Aorta (tissue), 5 donors: ENCODE measurements at regions of chr10 and their contacts with region 1.

Region 1: DNA sequence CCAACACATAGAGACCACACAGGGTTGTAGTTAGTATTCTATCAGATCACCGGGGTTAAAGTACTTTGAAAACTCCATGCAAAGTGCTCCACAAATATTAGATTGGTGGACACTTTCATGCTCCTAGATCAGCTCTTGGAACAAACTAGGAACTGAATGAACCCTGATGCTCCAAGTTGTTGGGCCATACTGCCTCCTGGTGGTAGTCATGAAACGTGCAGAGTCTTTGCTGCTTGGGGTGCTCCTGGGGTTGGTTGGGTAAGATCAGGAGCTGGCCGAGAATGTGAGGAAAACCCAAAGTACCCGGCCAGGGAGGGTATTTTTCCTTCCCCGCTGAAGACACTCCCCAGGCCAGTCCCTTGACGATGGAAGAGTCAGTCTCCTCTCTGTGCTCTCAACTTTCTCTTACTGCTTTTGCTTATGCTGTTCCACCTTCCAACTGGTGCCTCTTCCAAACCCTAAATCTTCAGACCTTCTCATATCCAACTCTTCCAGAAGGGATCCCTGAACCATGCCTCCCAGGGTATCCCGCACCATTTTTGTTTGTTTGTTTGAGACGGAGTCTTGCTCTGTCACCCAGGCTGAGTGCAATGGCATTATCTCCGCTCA is 920 bp upstream of the RPEL1 start:
- DNase-seq: peak; percentile 77 to 81
- ATAC-seq: peak; percentile 91
- H3K4me3 ChIP-seq: no peak overlapping the region
- H3K27ac ChIP-seq: no peak overlapping the region
- H3K4me1 ChIP-seq: peaks cover 0 to 7% of the 10 kb centered on the region in 2 donors
- H3K27me3 ChIP-seq: no peaks in the 10 kb centered on the region

Region 2: DNA sequence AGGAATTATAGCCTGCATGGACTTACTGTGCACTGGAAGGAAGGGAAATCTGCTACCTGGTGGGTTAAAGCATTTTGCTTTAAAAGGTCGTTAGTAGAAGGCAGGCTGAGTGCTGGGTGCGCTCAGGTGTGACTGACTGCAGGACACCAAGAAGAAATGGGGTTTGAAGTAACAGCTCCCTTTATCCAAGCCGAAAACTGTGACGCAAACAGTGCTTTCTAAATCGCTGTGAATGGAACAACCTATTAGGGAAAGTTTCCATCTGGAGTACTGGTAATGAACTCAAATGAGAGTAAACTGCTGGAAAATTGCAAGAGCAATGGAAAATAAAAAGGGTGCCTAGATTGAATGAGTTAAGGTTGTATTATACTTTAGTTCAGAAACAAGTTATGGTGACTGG is 231.4 kb before region 1 on chr10:
- intact Hi-C with region 1: no loop called
- DNase-seq: no peak
- ATAC-seq: no peak
- H3K4me3 ChIP-seq: no peak overlapping the region
- H3K27ac ChIP-seq: no peak overlapping the region
- H3K4me1 ChIP-seq: peaks cover 0 to 2% of the 10 kb centered on the region in 2 donors
- H3K27me3 ChIP-seq: no peaks in the 10 kb centered on the region

Region 3: GRCh38 chr10:103069453-103070331 is 175.1 kb before region 1 on chr10:
- intact Hi-C with region 1: loop called in 1 of 2 experiments (anchors 5 kb)
- DNase-seq: peak in 1 of 2 donors; percentile 69
- ATAC-seq: peak; percentile 51
- H3K4me3 ChIP-seq: no peak overlapping the region
- H3K27ac ChIP-seq: no peak overlapping the region
- H3K4me1 ChIP-seq: no peaks in the 10 kb centered on the region
- H3K27me3 ChIP-seq: no peaks in the 10 kb centered on the region

Region 4: GRCh38 chr10:103086799-103087198 is 158.0 kb before region 1 on chr10:
- intact Hi-C with region 1: loop called in 1 of 2 experiments (anchors 5 kb)
- DNase-seq: no peak
- ATAC-seq: no peak
- H3K4me3 ChIP-seq: no peak overlapping the region
- H3K27ac ChIP-seq: peak overlapping the region; percentile 39 to 60
- H3K4me1 ChIP-seq: peaks cover 0 to 7% of the 10 kb centered on the region in 2 donors
- H3K27me3 ChIP-seq: no peaks in the 10 kb centered on the region

Region 5: GRCh38 chr10:103262229-103262628 is 17.5 kb after region 1 on chr10:
- intact Hi-C with region 1: no loop called
- DNase-seq: no peak
- ATAC-seq: no peak
- H3K4me3 ChIP-seq: no peak overlapping the region
- H3K27ac ChIP-seq: no peak overlapping the region
- H3K4me1 ChIP-seq: no peaks in the 10 kb centered on the region
- H3K27me3 ChIP-seq: no peaks in the 10 kb centered on the region

Region 6: DNA sequence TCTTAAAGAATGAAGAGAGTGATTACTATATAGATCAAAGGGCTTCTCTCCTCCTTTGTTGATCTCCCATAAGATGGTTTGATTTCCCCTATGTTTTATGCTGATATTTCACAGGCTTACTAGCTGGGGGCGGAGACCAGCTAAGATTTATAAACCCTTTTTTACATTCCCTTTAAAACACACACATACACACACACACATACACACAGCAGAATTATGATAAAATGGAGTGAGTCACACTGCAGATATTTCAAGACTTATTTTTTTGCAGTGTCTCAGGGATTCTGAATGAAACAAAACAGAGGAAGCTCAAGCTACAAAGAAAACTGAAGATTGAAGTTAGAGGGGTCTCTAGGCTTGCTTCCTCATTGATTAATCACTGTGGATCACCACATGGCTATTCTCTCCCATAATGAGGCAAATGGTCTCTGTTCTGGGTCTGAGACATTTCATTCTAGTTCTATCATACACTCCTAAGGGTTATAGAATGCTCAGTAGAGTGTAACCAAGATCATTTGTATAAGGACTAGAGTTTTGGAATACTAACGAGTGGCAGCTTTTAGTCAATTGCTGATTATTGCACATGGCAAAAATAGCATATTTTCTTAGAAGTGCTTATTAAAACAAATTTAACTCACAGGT is 50.7 kb after region 1 on chr10:
- intact Hi-C with region 1: no loop called
- DNase-seq: no peak
- ATAC-seq: no peak
- H3K4me3 ChIP-seq: no peak overlapping the region
- H3K27ac ChIP-seq: no peak overlapping the region
- H3K4me1 ChIP-seq: no peaks in the 10 kb centered on the region
- H3K27me3 ChIP-seq: no peaks in the 10 kb centered on the region